ENCODE measurements at regions of chr10 and their contacts with region 1.

Region 1: DNA sequence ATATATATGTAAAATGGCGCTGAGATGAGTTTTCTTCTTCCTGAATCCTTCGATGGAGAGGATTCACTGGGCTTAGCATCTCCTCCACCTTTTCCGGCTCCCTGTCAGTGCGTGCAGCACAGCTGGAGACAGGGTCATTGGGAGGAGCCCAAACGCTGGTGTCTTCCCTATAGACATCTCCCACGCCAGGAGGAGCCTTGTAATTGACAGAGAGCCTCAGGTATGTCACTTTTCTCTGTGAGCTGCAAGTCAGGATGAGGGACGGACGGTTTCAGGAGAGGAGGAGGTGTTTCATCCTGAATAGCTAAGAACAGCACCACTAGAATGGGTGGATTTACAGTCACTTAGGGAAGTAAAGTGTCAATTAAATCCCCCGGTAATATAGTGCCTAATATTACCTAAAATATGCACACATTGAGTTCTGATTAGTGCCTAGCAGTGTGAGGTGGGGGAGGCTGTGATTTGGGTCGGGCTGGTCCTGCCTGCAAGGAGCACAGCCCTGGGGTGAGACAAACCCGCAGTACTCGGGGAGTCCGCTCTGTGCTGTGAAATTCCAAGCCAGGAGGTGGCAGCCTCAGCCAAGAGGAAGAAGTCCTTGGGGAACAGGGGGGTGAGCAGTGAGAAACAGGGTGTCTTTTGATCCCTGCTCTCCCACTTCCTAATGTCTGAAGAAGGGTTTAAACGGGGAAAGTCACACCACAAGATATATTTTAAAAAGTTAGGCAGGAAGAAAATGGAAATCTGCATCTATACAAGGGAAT is 28.2 kb downstream of the IL15RA start:
- DNase-seq: peak; percentile 63 to 75 (median 69)
- H3K4me3 ChIP-seq: no peak overlapping the region
- H3K27ac ChIP-seq: no peak overlapping the region
- H3K4me1 ChIP-seq: peaks cover 11% of the 10 kb centered on the region
- H3K27me3 ChIP-seq: no peaks in the 10 kb centered on the region
- CTCF ChIP-seq: peak in 2 of 3 donors; percentile 25 to 44
- EP300 ChIP-seq: no peak
- POLR2A ChIP-seq: no peak

Region 2: DNA sequence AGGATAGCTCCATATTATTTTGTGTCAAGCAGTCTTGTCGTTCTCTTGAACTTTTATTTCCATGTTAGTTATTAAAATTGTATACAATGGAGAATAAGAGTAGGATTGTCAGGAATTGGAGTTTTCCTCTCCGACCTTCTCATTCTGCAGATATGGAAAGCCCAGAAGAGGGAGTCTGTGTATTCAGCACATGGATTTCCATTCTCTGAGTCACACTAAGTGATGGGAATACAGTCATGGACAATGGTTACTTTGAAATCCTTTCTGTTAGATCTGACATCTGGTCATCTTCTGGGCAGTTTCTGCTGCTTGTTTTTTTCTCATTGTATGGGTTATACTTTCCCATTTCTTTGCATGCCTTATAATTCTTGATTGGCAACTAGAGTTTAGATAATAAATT is 269.6 kb before region 1 on chr10:
- intact Hi-C with region 1: no loop called
- DNase-seq: no peak
- H3K4me3 ChIP-seq: no peak overlapping the region
- H3K27ac ChIP-seq: no peak overlapping the region
- H3K4me1 ChIP-seq: no peaks in the 10 kb centered on the region
- H3K27me3 ChIP-seq: no peaks in the 10 kb centered on the region
- CTCF ChIP-seq: no peak
- EP300 ChIP-seq: no peak
- POLR2A ChIP-seq: no peak

Region 3: GRCh38 chr10:5732141-5732540 is 217.0 kb before region 1 on chr10:
- intact Hi-C with region 1: no loop called
- DNase-seq: no peak
- H3K4me3 ChIP-seq: no peak overlapping the region
- H3K27ac ChIP-seq: no peak overlapping the region
- H3K4me1 ChIP-seq: no peaks in the 10 kb centered on the region
- H3K27me3 ChIP-seq: no peaks in the 10 kb centered on the region
- CTCF ChIP-seq: no peak
- EP300 ChIP-seq: no peak
- POLR2A ChIP-seq: no peak

Region 4: GRCh38 chr10:5813287-5814109 is 135.7 kb before region 1 on chr10 and contains the start of gene GDI2:
- intact Hi-C with region 1: no loop called
- DNase-seq: peak; percentile 95 to 98 (median 97)
- H3K4me3 ChIP-seq: peak within 1 kb of the TSS; percentile 99
- H3K27ac ChIP-seq: peak within 1 kb of the TSS; percentile 75 to 94
- H3K4me1 ChIP-seq: peaks cover 6% of the 10 kb centered on the region
- H3K27me3 ChIP-seq: no peaks in the 10 kb centered on the region
- CTCF ChIP-seq: peak in 2 of 3 donors; percentile 11 to 20
- EP300 ChIP-seq: no peak
- POLR2A ChIP-seq: peak; percentile 74
- total RNA-seq, gene GDI2: 148 to 198 (median 177) TPM

Region 5: DNA sequence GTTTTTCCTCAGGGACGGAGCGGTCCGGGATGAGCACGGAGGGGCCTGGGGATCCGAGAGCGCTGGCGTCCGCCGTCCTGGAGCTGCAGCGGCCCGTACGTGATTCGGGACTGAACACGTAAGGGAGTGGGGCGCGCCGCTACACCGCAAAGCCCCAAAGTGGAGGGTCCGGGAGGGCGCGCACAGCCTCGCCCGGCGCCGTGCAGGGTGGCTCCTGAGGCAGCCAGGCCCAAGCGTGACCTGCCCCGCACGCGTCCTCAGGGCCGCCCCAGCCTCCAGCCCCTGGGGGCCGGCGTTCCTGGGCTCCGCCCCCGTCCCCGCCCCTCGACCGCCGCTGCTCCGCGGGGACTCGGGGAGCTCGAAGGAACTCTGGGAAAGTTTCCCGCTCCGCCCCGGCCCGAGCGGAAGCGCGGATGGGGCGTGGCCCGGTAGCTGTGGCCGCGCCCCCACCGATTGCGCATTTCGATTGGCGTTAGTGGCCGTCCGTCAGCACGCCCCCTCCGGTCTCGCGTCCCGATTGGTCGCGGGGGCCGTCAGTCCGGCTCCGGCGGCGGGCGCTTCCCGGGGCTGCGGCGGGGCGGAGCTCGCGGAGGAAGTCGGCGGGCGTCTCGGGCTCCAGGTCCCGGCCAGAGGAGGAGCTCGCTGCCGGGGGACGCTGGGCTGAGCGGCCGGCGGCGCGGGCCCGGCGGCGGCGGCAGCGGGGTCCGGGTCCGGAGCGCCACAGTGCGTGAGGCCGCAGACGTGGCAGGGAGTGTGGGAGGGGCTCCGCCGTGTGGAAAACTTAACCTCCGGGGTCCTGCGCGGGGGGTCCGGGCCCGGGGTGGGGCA is 59.3 kb before region 1 on chr10 and contains the starts of genes ANKRD16 and FBH1:
- intact Hi-C with region 1: loop called in 1 of 4 experiments (anchors 10 kb)
- DNase-seq: peak; percentile 99 to 100 (median 99)
- H3K4me3 ChIP-seq: peak within 1 kb of the TSS; percentile 85
- H3K27ac ChIP-seq: peak within 1 kb of the TSS; percentile 68 to 73
- H3K4me1 ChIP-seq: peaks cover 14% of the 10 kb centered on the region
- H3K27me3 ChIP-seq: no peaks in the 10 kb centered on the region
- CTCF ChIP-seq: no peak
- EP300 ChIP-seq: peak; percentile 37
- POLR2A ChIP-seq: peak; percentile 54
- total RNA-seq, gene ANKRD16: 8.6 to 15.3 (median 10.0) TPM
- total RNA-seq, gene FBH1: 54.6 to 80.3 (median 78.3) TPM

Region 6: GRCh38 chr10:5971315-5971832 is 22.2 kb after region 1 on chr10:
- intact Hi-C with region 1: no loop called
- DNase-seq: peak in 1 of 5 donors; percentile 17
- H3K4me3 ChIP-seq: no peak overlapping the region
- H3K27ac ChIP-seq: no peak overlapping the region
- H3K4me1 ChIP-seq: peaks cover 1% of the 10 kb centered on the region
- H3K27me3 ChIP-seq: no peaks in the 10 kb centered on the region
- CTCF ChIP-seq: no peak
- EP300 ChIP-seq: no peak
- POLR2A ChIP-seq: no peak

Region 7: DNA sequence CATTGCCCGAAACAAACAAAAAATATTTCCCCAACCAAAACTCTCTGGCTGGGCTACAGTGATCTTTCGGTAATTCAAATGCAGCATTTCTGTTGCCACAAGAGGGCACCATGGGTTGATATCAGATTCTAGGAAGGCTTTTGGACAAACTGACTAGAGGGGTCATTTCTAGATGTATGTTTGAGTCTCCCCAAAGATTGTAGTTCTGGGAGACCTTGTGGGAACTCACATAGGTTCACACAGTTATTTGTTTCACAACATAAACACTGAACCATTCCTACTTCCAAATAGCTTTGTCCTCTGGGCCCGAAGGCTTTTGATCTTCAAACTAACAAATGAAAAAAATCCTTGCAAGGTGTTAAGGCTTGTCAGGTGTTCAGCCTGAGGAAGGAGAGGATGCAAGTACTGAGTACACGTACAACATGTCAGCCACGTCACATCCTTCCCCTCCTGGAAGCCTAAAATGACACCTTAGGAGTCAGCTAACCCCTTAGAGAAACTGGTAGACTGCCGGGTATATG is 65.1 kb after region 1 on chr10:
- intact Hi-C with region 1: loop called in 1 of 4 experiments (anchors 10 kb)
- DNase-seq: peak in 4 of 5 donors; percentile 27 to 74 (median 44)
- H3K4me3 ChIP-seq: no peak overlapping the region
- H3K27ac ChIP-seq: no peak overlapping the region
- H3K4me1 ChIP-seq: peaks cover 9% of the 10 kb centered on the region
- H3K27me3 ChIP-seq: no peaks in the 10 kb centered on the region
- CTCF ChIP-seq: peak; percentile 20 to 44 (median 36)
- EP300 ChIP-seq: no peak
- POLR2A ChIP-seq: no peak

Measured in ovary (tissue), 10 donors.